CD8-positive, alpha-beta T cell (primary cell): ENCODE measurements at regions of chr1 and their contacts with region 1.

Region 1: GRCh38 chr1:171781176-171781875 is at the start of gene METTL13:
- DNase-seq: peak; percentile 96 to 99 (median 98)
- ATAC-seq: peak; percentile 90
- H3K4me3 ChIP-seq: peak within 1 kb of the TSS; percentile 89 to 92
- H3K4me3 Mint-ChIP-seq: peak within 1 kb of the TSS; percentile 95
- H3K27ac ChIP-seq: peak within 1 kb of the TSS; percentile 75 to 89
- H3K27ac Mint-ChIP-seq: peak within 1 kb of the TSS; percentile 96
- H3K4me1 ChIP-seq: peaks cover 33% of the 10 kb centered on the region
- H3K4me1 Mint-ChIP-seq: peaks cover 54% of the 10 kb centered on the region
- H3K27me3 ChIP-seq: no peaks in the 10 kb centered on the region
- H3K27me3 Mint-ChIP-seq: no peaks in the 10 kb centered on the region
- CTCF ChIP-seq: no peak
- total RNA-seq, gene METTL13: 6.6 to 6.9 TPM

Region 2: GRCh38 chr1:170531758-170532657 is 1249.3 kb before region 1 on chr1 and contains the start of gene GORAB:
- CTCF ChIA-PET with region 1: no interaction called
- POLR2A ChIA-PET with region 1: no interaction called
- intact Hi-C with region 1: loop called (anchors 5 kb)
- DNase-seq: peak; percentile 72 to 93 (median 85)
- ATAC-seq: peak; percentile 90
- H3K4me3 ChIP-seq: peak within 1 kb of the TSS; percentile 73 to 86
- H3K4me3 Mint-ChIP-seq: no peak within 1 kb of the TSS
- H3K27ac ChIP-seq: peak within 1 kb of the TSS; percentile 80 to 91
- H3K27ac Mint-ChIP-seq: no peak within 1 kb of the TSS
- H3K4me1 ChIP-seq: peaks cover 14% of the 10 kb centered on the region
- H3K4me1 Mint-ChIP-seq: peaks cover 22% of the 10 kb centered on the region
- H3K27me3 ChIP-seq: no peaks in the 10 kb centered on the region
- H3K27me3 Mint-ChIP-seq: no peaks in the 10 kb centered on the region
- CTCF ChIP-seq: no peak
- total RNA-seq, gene GORAB: 24.8 to 26.1 TPM

Region 3: DNA sequence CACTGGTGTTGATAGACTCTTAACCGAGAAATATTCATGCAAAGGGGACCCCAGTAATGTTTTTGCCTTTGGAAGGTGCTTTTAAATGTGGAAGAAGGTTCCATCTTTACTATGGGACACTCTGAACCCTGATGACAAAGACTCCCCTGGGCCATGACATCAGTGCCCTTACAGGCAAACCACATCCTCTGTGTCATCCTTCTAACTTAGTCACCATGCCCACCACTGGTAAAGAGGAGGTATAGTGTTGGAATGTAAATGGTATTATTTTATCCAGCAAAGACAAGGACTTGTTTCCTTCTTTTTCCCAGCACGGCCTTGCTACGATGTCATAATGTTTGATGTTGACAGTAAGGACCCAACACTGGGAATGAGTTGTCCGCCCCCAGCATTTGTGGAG is 12.8 kb after region 1 on chr1:
- CTCF ChIA-PET with region 1: no interaction called
- POLR2A ChIA-PET with region 1: interaction called, 4 read pairs
- intact Hi-C with region 1: loop called in 1 of 2 experiments (anchors 1 kb)
- DNase-seq: peak in 5 of 9 experiments; percentile 15 to 52 (median 38)
- ATAC-seq: peak; percentile 98
- H3K4me3 ChIP-seq: no peak overlapping the region
- H3K4me3 Mint-ChIP-seq: no peak overlapping the region
- H3K27ac ChIP-seq: no peak overlapping the region
- H3K27ac Mint-ChIP-seq: peak overlapping the region; percentile 17
- H3K4me1 ChIP-seq: no peaks in the 10 kb centered on the region
- H3K4me1 Mint-ChIP-seq: peaks cover 20% of the 10 kb centered on the region
- H3K27me3 ChIP-seq: no peaks in the 10 kb centered on the region
- H3K27me3 Mint-ChIP-seq: no peaks in the 10 kb centered on the region
- CTCF ChIP-seq: no peak

Region 4: DNA sequence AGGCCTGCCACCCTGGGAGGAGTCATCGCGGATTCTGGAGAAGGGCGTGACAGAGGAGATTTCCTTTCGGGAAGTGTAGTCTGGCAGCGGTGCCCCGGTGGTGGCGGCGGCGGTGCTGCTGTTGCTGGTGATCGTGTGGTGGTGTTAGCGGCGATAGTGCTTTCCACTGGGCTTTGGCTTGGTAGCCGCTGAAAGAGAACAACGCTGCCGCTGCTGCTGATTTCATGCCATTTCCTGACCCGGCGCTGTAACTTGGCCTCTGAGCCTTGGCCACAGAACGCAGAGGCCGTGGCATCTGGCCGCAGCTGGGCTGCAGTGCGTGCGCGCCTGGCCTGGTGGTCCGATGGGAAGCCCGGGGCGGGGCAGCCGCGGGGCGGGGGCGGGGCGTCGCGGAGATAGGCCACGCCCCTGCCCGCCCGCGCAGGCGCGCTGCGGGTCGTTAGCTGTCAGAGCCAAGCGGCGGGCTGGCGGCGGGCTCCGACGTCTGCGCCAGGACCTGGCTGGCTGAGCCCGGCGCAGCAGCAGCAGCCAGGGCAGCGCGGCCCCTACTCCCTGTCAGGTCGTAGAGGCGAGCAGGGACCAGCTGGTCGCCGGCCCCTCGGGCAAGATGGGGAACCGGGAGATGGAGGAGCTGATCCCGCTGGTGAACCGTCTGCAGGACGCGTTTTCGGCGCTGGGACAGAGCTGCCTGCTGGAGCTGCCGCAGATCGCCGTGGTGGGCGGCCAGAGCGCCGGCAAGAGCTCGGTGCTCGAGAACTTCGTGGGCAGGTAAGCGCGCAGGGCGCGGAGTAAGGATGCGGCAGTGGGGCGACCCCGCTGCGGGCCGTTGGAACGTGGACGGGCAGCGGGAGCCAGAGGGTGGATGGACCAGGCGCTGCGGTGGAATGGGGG is 60.0 kb after region 1 on chr1 and contains the start of gene DNM3:
- CTCF ChIA-PET with region 1: no interaction called
- POLR2A ChIA-PET with region 1: interaction called, 11 read pairs
- intact Hi-C with region 1: loop called (anchors 1 kb)
- DNase-seq: peak; percentile 51 to 89 (median 77)
- ATAC-seq: peak; percentile 94
- H3K4me3 ChIP-seq: peak within 1 kb of the TSS; percentile 75 to 80
- H3K4me3 Mint-ChIP-seq: peak within 1 kb of the TSS; percentile 87
- H3K27ac ChIP-seq: no peak within 1 kb of the TSS
- H3K27ac Mint-ChIP-seq: peak within 1 kb of the TSS; percentile 16
- H3K4me1 ChIP-seq: peaks cover 9% of the 10 kb centered on the region
- H3K4me1 Mint-ChIP-seq: peaks cover 14% of the 10 kb centered on the region
- H3K27me3 ChIP-seq: peaks cover 4 to 9% of the 10 kb centered on the region in 2 experiments
- H3K27me3 Mint-ChIP-seq: peaks cover 16% of the 10 kb centered on the region
- CTCF ChIP-seq: no peak
- total RNA-seq, gene DNM3: 0.72 to 1.1 TPM

Region 5: GRCh38 chr1:171868217-171868803 is 87.0 kb after region 1 on chr1:
- CTCF ChIA-PET with region 1: no interaction called
- POLR2A ChIA-PET with region 1: no interaction called
- intact Hi-C with region 1: no loop called
- DNase-seq: no peak
- ATAC-seq: no peak
- H3K4me3 ChIP-seq: no peak overlapping the region
- H3K4me3 Mint-ChIP-seq: no peak overlapping the region
- H3K27ac ChIP-seq: no peak overlapping the region
- H3K27ac Mint-ChIP-seq: no peak overlapping the region
- H3K4me1 ChIP-seq: no peaks in the 10 kb centered on the region
- H3K4me1 Mint-ChIP-seq: no peaks in the 10 kb centered on the region
- H3K27me3 ChIP-seq: no peaks in the 10 kb centered on the region
- H3K27me3 Mint-ChIP-seq: no peaks in the 10 kb centered on the region
- CTCF ChIP-seq: no peak

Region 6: DNA sequence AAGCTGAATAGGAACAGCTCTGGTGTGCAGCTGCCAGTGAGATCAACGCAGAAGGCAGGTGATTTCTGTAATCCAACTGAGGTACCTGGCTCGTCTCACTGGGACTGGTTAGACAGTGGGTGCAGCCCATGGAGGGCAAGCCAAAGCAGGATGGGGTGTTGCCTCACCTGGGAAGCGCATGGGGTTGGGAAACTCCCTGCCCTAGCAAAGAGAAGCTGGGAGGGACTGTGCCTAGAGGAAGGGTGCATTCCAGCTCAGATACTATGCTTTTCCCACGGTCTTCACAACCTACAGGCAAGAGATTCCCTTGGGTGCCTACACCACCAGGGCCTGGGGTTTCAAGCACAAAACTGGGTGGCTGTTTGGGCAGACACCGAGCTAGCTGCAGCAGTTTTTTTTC is 243.2 kb after region 1 on chr1:
- CTCF ChIA-PET with region 1: no interaction called
- POLR2A ChIA-PET with region 1: no interaction called
- intact Hi-C with region 1: no loop called
- DNase-seq: no peak
- ATAC-seq: no peak
- H3K4me3 ChIP-seq: no peak overlapping the region
- H3K4me3 Mint-ChIP-seq: no peak overlapping the region
- H3K27ac ChIP-seq: no peak overlapping the region
- H3K27ac Mint-ChIP-seq: no peak overlapping the region
- H3K4me1 ChIP-seq: no peaks in the 10 kb centered on the region
- H3K4me1 Mint-ChIP-seq: no peaks in the 10 kb centered on the region
- H3K27me3 ChIP-seq: no peaks in the 10 kb centered on the region
- H3K27me3 Mint-ChIP-seq: peaks cover 8% of the 10 kb centered on the region
- CTCF ChIP-seq: no peak